ENCODE measurements at regions of chr10 and their contacts with region 1.

Region 1: GRCh38 chr10:45464958-45465567 is 91.0 kb downstream of the ALOX5 start:
- DNase-seq: peak; percentile 67
- ATAC-seq: peak; percentile 99
- H3K4me3 ChIP-seq: no peak overlapping the region
- H3K27ac ChIP-seq: no peak overlapping the region
- H3K4me1 ChIP-seq: no peaks in the 10 kb centered on the region; the same call in 1 of the 2 replicates
- H3K27me3 ChIP-seq: no peaks in the 10 kb centered on the region
- CTCF ChIP-seq: peak; percentile 97
- POLR2A ChIP-seq: no peak
- RAD21 ChIP-seq: peak; percentile 98

Region 2: DNA sequence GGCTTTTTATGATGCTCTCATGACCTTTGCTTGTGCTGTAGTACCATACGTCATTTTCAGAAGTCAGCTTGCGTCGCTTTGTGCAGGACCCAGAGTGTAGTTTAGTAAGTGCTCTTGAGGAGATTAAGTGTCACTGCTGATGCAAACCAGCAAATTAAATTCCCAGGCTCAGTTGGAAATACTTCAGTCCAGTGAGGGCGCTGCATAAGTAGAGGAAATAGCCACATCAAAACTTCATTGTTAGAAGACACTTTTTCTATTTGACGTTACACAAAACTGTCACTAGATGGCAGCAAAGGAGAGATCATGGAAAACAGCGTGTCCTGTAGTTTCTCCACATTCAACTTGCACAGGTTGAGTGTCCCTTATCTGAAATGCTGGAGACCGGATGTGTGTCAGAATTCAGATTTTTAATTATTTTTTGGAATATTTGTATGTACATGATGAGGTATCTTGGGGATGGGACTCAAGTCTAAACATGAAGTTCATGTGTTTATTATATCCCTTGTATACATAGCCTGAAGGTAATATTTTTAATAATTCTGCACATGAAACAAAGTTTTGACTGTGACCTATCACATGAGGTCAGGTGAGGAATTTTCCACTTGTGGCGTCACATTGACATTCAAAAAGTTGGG is 456.4 kb before region 1 on chr10:
- CTCF ChIA-PET with region 1: no interaction called
- POLR2A ChIA-PET with region 1: no interaction called
- dilution Hi-C with region 1: no loop called
- in situ Hi-C with region 1: no loop called
- intact Hi-C with region 1: loop called (anchors 10 kb)
- DNase-seq: peak; percentile 89
- ATAC-seq: peak; percentile 97
- H3K4me3 ChIP-seq: no peak overlapping the region
- H3K27ac ChIP-seq: no peak overlapping the region
- H3K4me1 ChIP-seq: peaks cover 2% of the 10 kb centered on the region; the same call in 1 of the 2 replicates
- H3K27me3 ChIP-seq: no peaks in the 10 kb centered on the region
- CTCF ChIP-seq: peak; percentile 92
- POLR2A ChIP-seq: no peak
- RAD21 ChIP-seq: peak; percentile 87

Region 3: DNA sequence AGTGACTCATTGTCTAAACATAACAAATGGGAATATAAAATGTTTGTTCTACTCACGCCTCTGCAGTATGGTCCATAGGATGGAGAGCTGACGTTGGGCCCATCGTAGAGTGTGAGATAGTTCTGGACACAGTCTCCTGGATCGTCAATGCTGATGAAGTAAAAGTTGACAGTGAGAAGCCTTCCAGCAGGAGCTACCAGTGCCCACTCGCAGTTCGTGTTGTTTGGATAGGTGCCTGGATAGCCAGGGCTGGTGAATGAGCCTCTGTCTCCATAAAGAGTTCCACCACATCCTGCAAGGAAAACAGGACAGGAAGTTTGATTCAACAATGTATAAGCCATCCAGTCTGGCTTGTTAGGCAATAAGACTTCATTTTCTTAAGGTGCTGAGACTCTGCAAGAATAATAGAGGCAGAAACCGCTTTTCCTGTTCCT is 229.2 kb before region 1 on chr10:
- CTCF ChIA-PET with region 1: no interaction called
- POLR2A ChIA-PET with region 1: no interaction called
- dilution Hi-C with region 1: no loop called
- in situ Hi-C with region 1: no loop called
- intact Hi-C with region 1: loop called (anchors 5 kb)
- DNase-seq: peak; percentile 7
- ATAC-seq: peak; percentile 24
- H3K4me3 ChIP-seq: no peak overlapping the region
- H3K27ac ChIP-seq: no peak overlapping the region
- H3K4me1 ChIP-seq: no peaks in the 10 kb centered on the region
- H3K27me3 ChIP-seq: no peaks in the 10 kb centered on the region
- CTCF ChIP-seq: no peak
- POLR2A ChIP-seq: no peak
- RAD21 ChIP-seq: no peak

Region 4: DNA sequence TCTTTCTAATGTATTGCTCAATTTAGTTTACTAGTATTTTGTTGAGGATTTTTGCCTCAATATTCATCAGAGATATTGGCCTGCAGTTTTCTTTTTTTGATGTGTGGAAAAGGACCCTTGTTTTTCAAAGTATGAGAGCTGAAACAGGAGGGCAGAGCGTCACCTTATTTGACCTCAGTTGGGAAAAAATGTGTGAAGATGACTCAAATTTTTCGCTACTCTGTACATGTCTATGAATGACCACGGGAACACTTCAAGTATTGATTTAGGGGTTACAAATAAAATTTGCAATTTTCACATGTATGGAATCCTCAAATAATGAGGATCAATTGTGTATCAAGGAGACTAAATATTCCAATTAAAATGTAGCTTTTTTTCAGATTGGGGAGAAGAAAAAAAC is 104.4 kb after region 1 on chr10:
- CTCF ChIA-PET with region 1: no interaction called
- POLR2A ChIA-PET with region 1: no interaction called
- dilution Hi-C with region 1: no loop called
- in situ Hi-C with region 1: no loop called
- intact Hi-C with region 1: no loop called
- DNase-seq: no peak
- ATAC-seq: no peak
- H3K4me3 ChIP-seq: no peak overlapping the region
- H3K27ac ChIP-seq: no peak overlapping the region
- H3K4me1 ChIP-seq: no peaks in the 10 kb centered on the region
- H3K27me3 ChIP-seq: no peaks in the 10 kb centered on the region
- CTCF ChIP-seq: no peak
- POLR2A ChIP-seq: no peak
- RAD21 ChIP-seq: no peak

Region 5: GRCh38 chr10:45594276-45595106 is 129.4 kb after region 1 on chr10:
- CTCF ChIA-PET with region 1: no interaction called
- POLR2A ChIA-PET with region 1: no interaction called
- dilution Hi-C with region 1: no loop called
- in situ Hi-C with region 1: no loop called
- intact Hi-C with region 1: loop called (anchors 1 kb)
- DNase-seq: peak; percentile 89
- ATAC-seq: peak; percentile 95
- H3K4me3 ChIP-seq: peak overlapping the region; percentile 65
- H3K27ac ChIP-seq: no peak overlapping the region; the same call in 1 of the 2 replicates
- H3K4me1 ChIP-seq: peaks cover 2% of the 10 kb centered on the region; the same call in 1 of the 2 replicates
- H3K27me3 ChIP-seq: peaks cover 6% of the 10 kb centered on the region; the same call in 1 of the 2 replicates
- CTCF ChIP-seq: peak; percentile 4; the same call in 1 of the 2 replicates
- POLR2A ChIP-seq: no peak
- RAD21 ChIP-seq: no peak

Region 6: GRCh38 chr10:45672181-45673073 is 207.4 kb after region 1 on chr10 and contains the start of gene ZFAND4:
- CTCF ChIA-PET with region 1: interaction called, 5 read pairs
- POLR2A ChIA-PET with region 1: no interaction called
- dilution Hi-C with region 1: no loop called
- in situ Hi-C with region 1: loop called (anchors 10 kb)
- intact Hi-C with region 1: loop called (anchors 1 kb)
- DNase-seq: peak; percentile 94
- ATAC-seq: peak; percentile 97
- H3K4me3 ChIP-seq: peak within 1 kb of the TSS; percentile 95
- H3K27ac ChIP-seq: peak within 1 kb of the TSS; percentile 81
- H3K4me1 ChIP-seq: peaks cover 2% of the 10 kb centered on the region; the same call in 1 of the 2 replicates
- H3K27me3 ChIP-seq: no peaks in the 10 kb centered on the region
- CTCF ChIP-seq: peak; percentile 76
- POLR2A ChIP-seq: peak; percentile 54; the same call in 1 of the 2 replicates
- RAD21 ChIP-seq: peak; percentile 68
- total RNA-seq, gene ZFAND4: 3.4 and 5.0 TPM in 2 replicates

Region 7: DNA sequence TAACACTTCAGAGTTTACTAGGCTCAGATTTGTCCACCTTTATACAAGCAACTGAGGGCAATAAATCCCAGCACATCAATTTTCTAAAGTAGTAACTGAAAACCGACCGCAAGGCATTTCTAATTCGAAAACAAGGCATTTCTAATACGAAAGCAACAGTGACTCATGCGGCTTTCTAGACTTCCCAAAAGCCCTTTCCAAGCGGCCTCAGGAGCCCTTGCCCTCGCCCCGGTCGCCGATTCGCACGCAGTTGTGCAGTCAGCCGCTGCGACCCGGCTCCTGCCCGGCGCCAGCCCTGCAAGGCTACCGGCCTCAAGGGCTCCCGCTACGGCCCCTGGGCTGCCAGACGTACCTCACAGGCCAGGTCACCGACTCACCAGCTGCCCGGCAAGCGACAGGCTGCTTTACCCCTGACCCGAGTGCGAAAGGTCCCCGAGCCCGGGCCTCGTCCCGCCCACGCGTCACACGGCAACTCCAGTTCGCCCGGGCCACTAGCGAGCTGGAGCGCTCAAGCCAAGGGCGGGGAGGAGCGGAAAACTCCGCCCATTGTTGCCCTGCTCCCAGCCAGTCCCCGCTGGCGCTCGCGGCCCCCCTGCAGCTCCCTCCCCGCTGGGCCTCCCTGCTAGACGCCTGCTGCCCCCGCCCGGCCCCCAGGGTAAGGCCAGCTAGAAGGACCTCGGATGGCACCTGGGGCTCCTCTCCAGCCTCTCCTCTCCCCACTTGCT is 558.1 kb after region 1 on chr10:
- CTCF ChIA-PET with region 1: no interaction called
- POLR2A ChIA-PET with region 1: no interaction called
- dilution Hi-C with region 1: no loop called
- in situ Hi-C with region 1: no loop called
- intact Hi-C with region 1: loop called (anchors 10 kb)
- DNase-seq: peak; percentile 93
- ATAC-seq: peak; percentile 96
- H3K4me3 ChIP-seq: peak overlapping the region; percentile 82
- H3K27ac ChIP-seq: peak overlapping the region; percentile 84
- H3K4me1 ChIP-seq: peaks cover 33% of the 10 kb centered on the region
- H3K27me3 ChIP-seq: no peaks in the 10 kb centered on the region
- CTCF ChIP-seq: peak; percentile 35; the same call in 1 of the 2 replicates
- POLR2A ChIP-seq: peak; percentile 68
- RAD21 ChIP-seq: peak; percentile 42

Measured in IMR-90 (cell line).